ENCODE measurements at regions of chr3 and their contacts with region 1.

Region 1: GRCh38 chr3:14297784-14298236 is 104.6 kb upstream of the SLC6A6 start:
- DNase-seq: peak in 1 of 2 experiments; percentile 67
- H3K4me3 ChIP-seq: peak overlapping the region in 1 of 4 experiments; percentile 31; a peak in 1 of 8 replicates
- H3K27ac ChIP-seq: no peak overlapping the region
- H3K4me1 ChIP-seq: peaks cover 0 to 4% (median 0%) of the 10 kb centered on the region in 4 experiments; a peak in 1 of 7 replicates
- H3K27me3 ChIP-seq: peaks cover 0 to 2% (median under 1%) of the 10 kb centered on the region in 4 experiments; a peak in 2 of 7 replicates
- CTCF ChIP-seq: no peak
- EP300 ChIP-seq: no peak
- POLR2A ChIP-seq: no peak
- RAD21 ChIP-seq: no peak

Region 2: GRCh38 chr3:14154895-14155440 is 142.8 kb before region 1 on chr3:
- CTCF ChIA-PET with region 1: no interaction called
- POLR2A ChIA-PET with region 1: no interaction called
- DNase-seq: no peak
- H3K4me3 ChIP-seq: no peak overlapping the region
- H3K27ac ChIP-seq: no peak overlapping the region
- H3K4me1 ChIP-seq: no peaks in the 10 kb centered on the region
- H3K27me3 ChIP-seq: no peaks in the 10 kb centered on the region
- CTCF ChIP-seq: no peak
- EP300 ChIP-seq: no peak
- POLR2A ChIP-seq: no peak
- RAD21 ChIP-seq: no peak

Region 3: DNA sequence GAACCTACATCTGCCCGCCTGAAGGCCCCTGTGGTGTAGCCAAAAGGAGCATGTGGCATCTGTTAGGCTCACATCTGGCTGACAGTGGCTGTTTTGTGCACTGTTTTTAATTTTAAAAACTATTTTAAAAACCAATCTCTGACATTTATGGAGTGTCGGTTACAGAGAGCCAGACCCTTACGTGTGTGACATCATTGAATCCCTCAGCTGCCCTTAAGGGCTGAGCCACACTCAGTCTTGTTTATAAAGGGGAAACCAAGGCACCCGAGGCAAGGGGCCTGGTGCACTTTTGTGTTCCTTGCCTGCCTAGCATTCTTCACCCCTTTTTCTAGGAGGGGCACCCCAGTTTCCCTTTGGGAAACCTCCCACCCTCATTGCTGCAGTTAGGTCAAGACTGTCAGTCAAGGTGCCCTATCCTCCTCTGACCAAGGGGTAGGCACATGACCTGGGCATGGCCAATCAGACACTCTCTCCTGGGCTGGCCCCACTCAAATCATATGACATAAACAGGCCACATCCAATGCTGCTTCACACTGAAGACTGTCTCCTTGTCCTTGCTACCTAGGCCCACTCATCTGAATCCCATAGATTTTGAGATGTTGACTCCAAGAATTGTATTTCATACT is 13.9 kb before region 1 on chr3:
- CTCF ChIA-PET with region 1: interaction called, 75 read pairs
- POLR2A ChIA-PET with region 1: interaction called, 11 read pairs
- DNase-seq: no peak
- H3K4me3 ChIP-seq: no peak overlapping the region
- H3K27ac ChIP-seq: no peak overlapping the region
- H3K4me1 ChIP-seq: peaks cover 6 to 23% (median 21%) of the 10 kb centered on the region in 4 experiments
- H3K27me3 ChIP-seq: no peaks in the 10 kb centered on the region; a peak in 1 of 7 replicates
- CTCF ChIP-seq: no peak
- EP300 ChIP-seq: no peak
- POLR2A ChIP-seq: no peak
- RAD21 ChIP-seq: no peak